ENCODE measurements at regions of chr1 and their contacts with region 1.

Region 1: DNA sequence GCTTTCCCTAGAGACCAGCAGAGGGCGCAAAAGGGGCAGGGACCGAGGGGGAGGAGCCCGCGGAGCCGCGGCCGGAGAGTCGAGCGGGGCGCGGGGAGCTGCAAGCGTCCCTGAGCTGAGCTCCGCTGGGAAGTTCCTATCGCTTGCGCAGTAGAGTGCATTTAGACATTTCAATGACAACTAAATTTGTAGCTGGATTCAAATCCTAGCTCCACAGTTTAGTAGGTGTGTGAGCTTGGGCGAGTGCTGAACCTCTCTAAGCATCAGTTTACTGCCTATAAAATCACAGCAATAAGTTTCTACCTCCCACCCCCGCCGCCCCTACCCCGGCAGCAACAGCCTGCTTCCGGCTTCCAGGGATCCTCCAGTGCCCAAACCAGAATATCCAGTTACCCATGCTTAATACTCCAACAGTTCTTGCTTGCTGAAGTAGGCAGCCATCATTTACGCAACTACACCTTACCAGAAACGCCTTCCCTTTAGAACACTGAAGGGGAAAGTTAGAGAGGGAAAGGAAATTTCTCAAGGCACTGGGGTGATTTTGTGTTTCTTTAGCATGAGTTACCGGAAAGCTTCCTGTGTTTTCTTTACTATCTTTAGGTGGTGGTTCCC is 9.1 kb downstream of the TLR5 start:
- DNase-seq: peak; percentile 86
- H3K4me3 Mint-ChIP-seq: peak overlapping the region; percentile 56
- H3K27ac Mint-ChIP-seq: no peak overlapping the region
- H3K4me1 Mint-ChIP-seq: peaks cover 13% of the 10 kb centered on the region
- H3K27me3 Mint-ChIP-seq: peaks cover 3% of the 10 kb centered on the region

Region 2: GRCh38 chr1:223114871-223115270 is 19.1 kb before region 1 on chr1:
- CTCF ChIA-PET with region 1: interaction called, 11 read pairs
- intact Hi-C with region 1: no loop called
- DNase-seq: no peak
- H3K4me3 Mint-ChIP-seq: no peak overlapping the region
- H3K27ac Mint-ChIP-seq: no peak overlapping the region
- H3K4me1 Mint-ChIP-seq: peaks cover 1% of the 10 kb centered on the region
- H3K27me3 Mint-ChIP-seq: no peaks in the 10 kb centered on the region

Region 3: DNA sequence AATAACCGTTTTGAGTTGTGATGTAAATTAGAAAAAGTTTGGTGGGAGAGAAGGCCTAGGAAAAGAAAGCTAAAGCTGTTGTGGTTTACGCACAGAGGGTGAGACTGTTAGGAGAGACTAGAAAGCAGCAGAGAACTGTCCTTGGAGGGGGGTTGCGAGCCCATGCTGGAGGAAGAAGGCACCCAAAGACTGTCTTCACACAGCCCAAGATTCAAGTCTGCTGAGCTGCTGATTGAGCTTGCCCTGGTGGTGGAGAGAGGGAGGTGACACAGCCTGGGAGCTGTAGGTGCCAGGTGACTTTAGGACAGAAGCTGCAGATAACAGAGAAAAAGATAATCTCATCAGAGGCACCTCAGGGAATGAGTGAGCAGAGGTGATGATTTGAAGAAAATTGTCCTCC is 27.4 kb after region 1 on chr1:
- CTCF ChIA-PET with region 1: interaction called, 13 read pairs
- intact Hi-C with region 1: no loop called
- DNase-seq: no peak
- H3K4me3 Mint-ChIP-seq: no peak overlapping the region
- H3K27ac Mint-ChIP-seq: no peak overlapping the region
- H3K4me1 Mint-ChIP-seq: peaks cover 9% of the 10 kb centered on the region
- H3K27me3 Mint-ChIP-seq: no peaks in the 10 kb centered on the region

Region 4: DNA sequence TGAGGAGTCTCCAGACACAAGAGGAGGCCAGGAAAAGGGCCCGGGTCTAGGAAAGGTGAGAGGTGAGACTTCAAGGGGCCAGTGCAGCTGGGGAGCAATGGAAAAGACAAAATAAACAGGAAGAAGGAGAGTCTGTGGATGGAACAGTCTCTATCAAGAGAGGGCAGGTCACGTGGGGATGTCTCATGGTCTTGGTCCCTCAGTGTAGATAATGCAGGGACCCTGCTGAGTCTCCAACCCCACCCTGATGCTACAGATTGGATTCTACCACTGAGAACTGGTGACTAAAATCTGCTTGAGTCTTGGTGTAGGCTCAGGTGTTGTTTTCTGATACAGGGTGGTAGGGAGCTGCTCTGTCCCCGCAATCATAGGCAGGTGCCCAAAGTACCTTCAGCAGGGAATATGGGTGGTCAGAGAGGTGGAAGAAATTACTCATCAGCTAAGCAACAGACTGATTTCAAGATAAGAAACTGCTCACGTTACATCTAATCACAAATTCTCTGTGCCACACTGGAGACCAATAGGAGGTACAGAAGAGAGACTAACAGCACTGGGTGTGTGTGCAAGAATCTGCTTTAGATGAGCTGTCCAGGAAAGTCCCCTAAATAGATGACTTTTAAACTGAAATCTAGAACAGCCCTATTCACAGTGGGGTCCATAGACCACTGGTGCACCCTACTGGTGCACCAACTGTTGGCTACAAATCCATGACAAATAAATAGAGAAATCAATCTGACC is 110.6 kb after region 1 on chr1:
- CTCF ChIA-PET with region 1: interaction called, 31 read pairs
- intact Hi-C with region 1: loop called (anchors 1 kb)
- DNase-seq: peak; percentile 58
- H3K4me3 Mint-ChIP-seq: no peak overlapping the region
- H3K27ac Mint-ChIP-seq: peak overlapping the region; percentile 69
- H3K4me1 Mint-ChIP-seq: peaks cover 45% of the 10 kb centered on the region
- H3K27me3 Mint-ChIP-seq: no peaks in the 10 kb centered on the region

Region 5: DNA sequence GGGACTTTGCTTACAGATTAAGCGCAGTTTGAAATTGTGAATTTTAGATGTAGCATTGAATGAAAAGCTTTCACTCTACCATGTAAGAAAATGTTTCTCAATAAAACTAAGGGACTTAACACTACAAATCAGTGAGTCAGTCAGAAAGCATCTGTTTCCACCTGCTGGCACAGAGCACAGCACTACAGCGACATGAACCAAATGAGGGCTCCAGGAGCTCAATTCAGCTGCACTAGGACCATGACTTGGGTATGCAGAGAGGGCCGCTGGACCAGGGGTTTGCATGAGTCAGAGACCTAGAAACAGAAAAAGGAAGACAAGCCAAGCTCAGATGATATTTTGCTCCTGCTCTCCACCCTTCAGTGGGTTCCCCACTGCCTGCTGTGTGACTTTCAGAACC is 224.9 kb after region 1 on chr1:
- CTCF ChIA-PET with region 1: interaction called, 26 read pairs
- intact Hi-C with region 1: loop called (anchors 1 kb)
- DNase-seq: peak; percentile 24
- H3K4me3 Mint-ChIP-seq: no peak overlapping the region
- H3K27ac Mint-ChIP-seq: no peak overlapping the region
- H3K4me1 Mint-ChIP-seq: peaks cover 17% of the 10 kb centered on the region
- H3K27me3 Mint-ChIP-seq: peaks cover 5% of the 10 kb centered on the region

Region 6: DNA sequence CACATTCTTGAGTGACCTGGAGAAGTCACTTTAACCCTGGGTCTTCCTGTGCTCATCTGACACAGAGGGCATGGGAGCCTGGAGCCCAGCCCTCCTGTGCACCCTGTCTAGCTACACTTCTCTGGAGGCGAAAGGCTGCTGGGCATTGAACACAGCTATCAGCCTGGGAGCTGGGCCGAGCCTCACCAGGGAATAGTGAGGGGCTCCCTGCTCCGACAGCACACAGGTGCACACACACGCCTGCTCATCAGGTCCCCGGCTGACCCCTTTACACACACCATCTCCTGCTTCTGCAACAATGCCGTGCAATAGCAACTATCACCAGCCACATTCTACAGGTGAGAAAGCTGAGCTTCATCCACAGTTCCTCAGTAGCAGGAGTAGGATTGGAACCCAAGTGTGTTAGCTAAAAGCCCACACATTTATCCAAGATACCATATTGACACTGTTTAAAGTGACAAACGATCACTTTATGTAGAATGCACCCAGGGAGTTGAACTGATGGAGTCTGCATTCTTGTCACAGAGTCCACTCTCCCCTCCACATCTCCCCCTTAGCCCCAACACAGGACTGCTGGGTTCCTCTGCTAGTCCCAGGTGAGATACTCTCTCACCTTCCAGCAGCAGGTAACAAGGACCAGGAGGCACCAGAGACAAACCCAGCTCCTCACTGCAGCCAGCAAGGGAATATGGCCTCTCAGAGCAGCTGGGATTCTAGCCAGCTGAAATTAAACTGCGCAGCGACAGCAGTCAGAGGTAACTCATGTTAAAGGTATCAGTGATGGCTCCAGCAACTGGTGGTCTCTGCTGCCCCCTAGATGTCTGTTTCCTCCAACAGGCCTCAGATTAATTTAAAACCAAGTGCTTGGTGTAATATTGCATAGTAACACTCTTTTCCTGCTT is 549.9 kb after region 1 on chr1:
- CTCF ChIA-PET with region 1: interaction called, 8 read pairs
- intact Hi-C with region 1: loop called (anchors 1 kb)
- DNase-seq: peak; percentile 78
- H3K4me3 Mint-ChIP-seq: no peak overlapping the region
- H3K27ac Mint-ChIP-seq: no peak overlapping the region
- H3K4me1 Mint-ChIP-seq: peaks cover 3% of the 10 kb centered on the region
- H3K27me3 Mint-ChIP-seq: no peaks in the 10 kb centered on the region